HepG2 (cell line): ENCODE measurements at regions of chr7 and their contacts with region 1.

Region 1: DNA sequence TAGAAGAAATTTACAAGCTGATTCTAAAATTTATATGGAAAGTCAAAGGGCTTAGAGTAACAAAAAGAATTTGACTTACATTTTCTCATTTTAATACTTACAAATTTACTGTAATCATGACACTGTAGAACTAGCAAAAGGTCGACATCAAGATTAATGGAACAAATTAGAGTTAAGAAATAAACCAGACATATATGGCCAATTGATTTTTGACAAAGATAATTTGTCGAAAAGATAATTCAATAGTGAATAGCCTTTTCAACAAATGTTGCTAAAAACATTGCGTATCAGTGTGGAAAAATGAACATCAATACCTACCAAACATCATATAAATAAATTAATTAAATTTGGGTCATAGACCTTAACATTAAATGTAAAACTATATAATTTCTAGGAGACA is 955.5 kb upstream of the AUTS2 start:
- DNase-seq: no peak
- ATAC-seq: no peak
- H3K4me3 ChIP-seq: no peak overlapping the region
- H3K27ac ChIP-seq: no peak overlapping the region
- H3K4me1 ChIP-seq: no peaks in the 10 kb centered on the region
- H3K27me3 ChIP-seq: no peaks in the 10 kb centered on the region
- CTCF ChIP-seq: no peak
- EP300 ChIP-seq: no peak
- POLR2A ChIP-seq: no peak
- RAD21 ChIP-seq: no peak

Region 2: GRCh38 chr7:69439636-69440325 is 797.1 kb after region 1 on chr7:
- CTCF ChIA-PET with region 1: no interaction called
- POLR2A ChIA-PET with region 1: no interaction called
- in situ Hi-C with region 1: no loop called
- intact Hi-C with region 1: loop called (anchors 5 kb)
- DNase-seq: no peak
- ATAC-seq: no peak
- H3K4me3 ChIP-seq: no peak overlapping the region
- H3K27ac ChIP-seq: no peak overlapping the region
- H3K4me1 ChIP-seq: no peaks in the 10 kb centered on the region
- H3K27me3 ChIP-seq: no peaks in the 10 kb centered on the region
- CTCF ChIP-seq: no peak
- EP300 ChIP-seq: no peak
- POLR2A ChIP-seq: no peak
- RAD21 ChIP-seq: no peak